ENCODE measurements at regions of chr4 and their contacts with region 1.

Region 1: DNA sequence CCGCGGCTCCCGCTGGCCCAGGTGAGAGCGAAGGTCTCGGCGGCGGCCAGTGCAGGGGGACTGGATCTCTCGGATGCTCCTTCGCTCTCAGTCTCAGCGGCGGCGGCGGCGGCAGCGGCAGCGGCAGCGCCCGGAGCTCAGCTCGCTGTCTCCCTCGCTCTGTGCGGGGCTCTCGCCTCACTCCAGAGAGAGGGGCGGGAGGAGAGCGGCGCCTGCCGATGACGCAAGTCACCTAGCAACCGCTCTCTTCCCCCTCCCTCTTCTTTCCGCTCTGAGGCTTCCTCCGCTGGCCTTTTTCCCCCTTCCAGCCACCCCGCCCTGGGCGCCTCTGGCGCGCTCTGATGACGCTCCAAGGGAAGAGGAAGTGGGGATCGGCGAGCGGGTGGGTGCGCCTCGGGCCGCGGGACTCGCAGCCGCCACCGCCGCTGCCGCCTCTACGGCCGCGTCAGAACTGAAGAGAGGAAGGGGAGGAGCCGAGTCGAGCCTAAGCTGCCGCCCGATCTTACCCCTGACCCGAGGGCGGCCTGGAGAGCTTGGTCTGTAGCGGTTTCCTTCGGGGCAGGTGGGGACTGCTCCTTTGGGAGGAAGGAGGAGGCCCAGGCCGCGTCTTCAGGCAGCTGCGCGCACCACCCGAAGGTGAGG is at the start of gene FBXW7:
- DNase-seq: peak; percentile 97 to 100 (median 100)
- ATAC-seq: peak; percentile 83
- H3K4me3 Mint-ChIP-seq: peak within 1 kb of the TSS; percentile 86 to 100 (median 98)
- H3K27ac Mint-ChIP-seq: peak within 1 kb of the TSS; percentile 94 to 100 (median 97)
- H3K4me1 Mint-ChIP-seq: peaks cover 36 to 77% (median 65%) of the 10 kb centered on the region in 4 donors
- H3K27me3 Mint-ChIP-seq: no peaks in the 10 kb centered on the region
- polyA plus RNA-seq, gene FBXW7: 30.0 to 41.4 (median 31.5) TPM

Region 2: GRCh38 chr4:152500800-152501434 is 35.1 kb before region 1 on chr4:
- POLR2A ChIA-PET with region 1: interaction called, 12 read pairs
- DNase-seq: peak in 9 of 10 donors; percentile 33 to 85 (median 73)
- ATAC-seq: peak; percentile 82 to 83
- H3K4me3 Mint-ChIP-seq: no peak overlapping the region
- H3K27ac Mint-ChIP-seq: peak overlapping the region in 4 of 10 donors; percentile 6 to 44 (median 34)
- H3K4me1 Mint-ChIP-seq: peaks cover 12 to 40% (median 33%) of the 10 kb centered on the region in 4 donors
- H3K27me3 Mint-ChIP-seq: no peaks in the 10 kb centered on the region

Region 3: DNA sequence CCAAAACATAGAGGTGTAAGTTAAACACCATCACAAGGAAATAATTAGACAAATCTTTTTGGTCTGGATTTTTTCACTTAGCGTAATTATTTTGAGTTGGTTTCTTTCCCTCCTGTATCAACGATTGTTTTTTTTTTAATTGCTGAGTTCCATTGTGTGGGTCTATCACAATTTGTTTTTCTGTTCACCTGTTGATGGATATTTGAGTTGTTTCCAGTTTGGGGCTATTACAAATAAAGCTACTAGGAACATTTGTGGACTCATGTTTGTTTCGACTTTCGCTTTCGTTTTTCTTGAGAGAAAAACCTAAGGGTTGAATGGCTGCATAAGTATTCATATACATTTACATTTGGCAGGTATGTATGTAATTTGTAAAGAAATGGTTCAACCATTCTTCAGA is 20.3 kb after region 1 on chr4:
- POLR2A ChIA-PET with region 1: interaction called, 68 read pairs
- DNase-seq: no peak
- ATAC-seq: no peak
- H3K4me3 Mint-ChIP-seq: peak overlapping the region in 2 of 10 donors; percentile 17 to 41
- H3K27ac Mint-ChIP-seq: peak overlapping the region in 7 of 10 donors; percentile 57 to 89 (median 72)
- H3K4me1 Mint-ChIP-seq: peaks cover 19 to 47% (median 41%) of the 10 kb centered on the region in 4 donors
- H3K27me3 Mint-ChIP-seq: no peaks in the 10 kb centered on the region

Region 4: GRCh38 chr4:152679414-152680281 is 143.6 kb after region 1 on chr4 and contains the start of gene TMEM154:
- POLR2A ChIA-PET with region 1: interaction called, 12 read pairs
- DNase-seq: peak; percentile 47 to 85 (median 66)
- ATAC-seq: peak; percentile 98 to 99
- H3K4me3 Mint-ChIP-seq: peak within 1 kb of the TSS; percentile 89 to 97 (median 94)
- H3K27ac Mint-ChIP-seq: peak within 1 kb of the TSS; percentile 90 to 98 (median 95)
- H3K4me1 Mint-ChIP-seq: peaks cover 17 to 59% (median 41%) of the 10 kb centered on the region in 4 donors
- H3K27me3 Mint-ChIP-seq: no peaks in the 10 kb centered on the region
- polyA plus RNA-seq, gene TMEM154: 24.7 to 30.8 (median 28.4) TPM

Region 5: GRCh38 chr4:152779513-152780266 is 243.7 kb after region 1 on chr4 and contains the starts of genes ARFIP1 and TIGD4:
- POLR2A ChIA-PET with region 1: interaction called, 12 read pairs
- DNase-seq: peak; percentile 82 to 96 (median 93)
- ATAC-seq: peak; percentile 83 to 85
- H3K4me3 Mint-ChIP-seq: peak within 1 kb of the TSS; percentile 92 to 100 (median 99)
- H3K27ac Mint-ChIP-seq: peak within 1 kb of the TSS; percentile 87 to 99 (median 97)
- H3K4me1 Mint-ChIP-seq: peaks cover 18 to 56% (median 48%) of the 10 kb centered on the region in 4 donors
- H3K27me3 Mint-ChIP-seq: peaks cover 0 to 12% (median 3%) of the 10 kb centered on the region in 5 donors
- polyA plus RNA-seq, gene ARFIP1: 12.2 to 21.3 (median 17.9) TPM
- polyA plus RNA-seq, gene TIGD4: 0.12 TPM in 1 of 3 donors, not detected in the others